ENCODE measurements at regions of chr10 and their contacts with region 1.

Region 1: DNA sequence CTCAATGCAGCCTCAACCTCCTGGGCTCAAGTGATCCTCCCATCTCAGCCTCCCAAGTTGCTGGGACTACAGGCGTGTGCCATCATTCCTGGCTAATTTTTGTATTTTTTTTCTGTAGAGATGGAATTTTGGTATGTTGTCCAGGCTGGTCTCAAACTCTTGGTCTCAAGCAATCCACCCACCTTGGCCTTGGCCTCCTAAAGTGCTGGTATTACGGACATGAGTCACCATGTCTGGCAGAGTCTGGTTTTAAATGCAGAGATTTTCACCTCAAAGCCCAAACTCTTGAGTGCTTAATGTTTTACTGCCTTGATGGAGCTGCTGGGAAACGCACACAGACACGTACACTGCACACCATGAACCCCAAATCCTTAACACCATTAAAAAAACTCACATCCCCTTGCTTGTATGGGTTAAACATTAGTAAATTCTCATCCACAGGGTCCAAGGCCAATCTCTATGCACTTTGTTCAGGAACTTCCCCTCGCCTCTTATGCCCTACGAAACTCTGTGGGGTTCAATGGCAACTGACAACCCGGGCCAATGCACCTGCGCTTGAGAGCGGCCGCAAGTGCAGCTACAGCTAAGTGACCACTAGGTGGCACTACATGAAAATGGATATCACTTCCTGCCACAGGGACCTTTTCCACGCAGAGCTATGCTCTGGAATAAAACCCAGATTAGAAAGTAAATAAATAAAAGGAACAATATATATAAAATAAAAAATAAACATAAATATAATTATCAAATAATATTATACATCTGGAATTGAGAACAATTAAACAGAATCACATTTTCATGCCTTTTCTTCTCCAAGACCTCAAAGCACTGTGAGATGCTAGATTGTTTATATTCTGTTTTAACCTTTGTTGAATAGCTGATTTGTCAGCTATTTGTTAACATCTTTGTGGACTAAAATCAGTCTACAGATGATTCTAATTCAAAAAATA is 66.9 kb upstream of the AFAP1L2 start:
- DNase-seq: peak; percentile 66 to 82
- ATAC-seq: peak; percentile 89
- H3K4me3 ChIP-seq: no peak overlapping the region
- H3K27ac ChIP-seq: no peak overlapping the region
- H3K4me1 ChIP-seq: no peaks in the 10 kb centered on the region
- H3K27me3 ChIP-seq: no peaks in the 10 kb centered on the region

Region 2: DNA sequence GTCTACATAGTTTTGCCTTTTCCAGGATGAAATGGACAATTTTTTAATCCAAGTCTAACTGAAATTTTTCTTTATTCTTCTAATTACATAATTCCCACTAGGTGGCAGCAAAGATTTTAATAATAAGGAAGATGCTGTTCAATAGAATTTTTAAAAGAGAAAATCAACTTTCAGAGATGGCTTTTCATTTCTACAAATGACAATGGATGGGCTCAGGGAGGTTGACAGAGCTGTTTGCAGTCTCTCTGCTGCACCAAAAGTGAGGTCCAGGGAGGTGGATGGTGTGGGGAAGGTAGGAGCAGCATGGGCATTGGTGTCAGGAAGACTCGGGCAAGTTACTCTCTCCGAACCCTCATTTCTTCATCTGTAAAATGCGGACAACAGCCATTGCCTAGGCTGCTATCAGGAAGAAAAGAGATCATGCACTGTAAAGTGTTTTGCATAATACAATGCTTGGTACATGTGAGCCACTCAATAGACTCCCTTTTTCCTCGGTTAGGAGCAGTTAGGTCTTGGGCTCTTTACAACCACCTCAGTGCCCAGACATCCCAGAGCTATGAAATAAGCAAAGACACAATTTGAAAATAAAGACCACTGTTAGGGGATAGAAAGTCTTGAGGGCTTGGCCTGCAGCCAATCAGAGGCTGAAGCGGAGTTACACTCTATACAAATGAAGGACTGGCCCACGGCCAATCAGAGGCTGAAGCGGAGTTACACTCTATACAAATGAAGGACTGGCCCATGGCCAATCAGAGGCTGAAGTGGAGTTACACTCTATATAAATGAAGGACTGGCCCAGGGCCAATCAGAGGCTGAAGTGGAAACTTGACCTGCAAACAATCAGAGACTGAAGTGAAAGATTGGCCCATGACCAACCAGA is 79.8 kb after region 1 on chr10:
- intact Hi-C with region 1: loop called (anchors 1 to 5 kb)
- DNase-seq: peak in 1 of 2 donors; percentile 53
- ATAC-seq: peak; percentile 58
- H3K4me3 ChIP-seq: no peak overlapping the region
- H3K27ac ChIP-seq: no peak overlapping the region
- H3K4me1 ChIP-seq: no peaks in the 10 kb centered on the region
- H3K27me3 ChIP-seq: no peaks in the 10 kb centered on the region

Region 3: DNA sequence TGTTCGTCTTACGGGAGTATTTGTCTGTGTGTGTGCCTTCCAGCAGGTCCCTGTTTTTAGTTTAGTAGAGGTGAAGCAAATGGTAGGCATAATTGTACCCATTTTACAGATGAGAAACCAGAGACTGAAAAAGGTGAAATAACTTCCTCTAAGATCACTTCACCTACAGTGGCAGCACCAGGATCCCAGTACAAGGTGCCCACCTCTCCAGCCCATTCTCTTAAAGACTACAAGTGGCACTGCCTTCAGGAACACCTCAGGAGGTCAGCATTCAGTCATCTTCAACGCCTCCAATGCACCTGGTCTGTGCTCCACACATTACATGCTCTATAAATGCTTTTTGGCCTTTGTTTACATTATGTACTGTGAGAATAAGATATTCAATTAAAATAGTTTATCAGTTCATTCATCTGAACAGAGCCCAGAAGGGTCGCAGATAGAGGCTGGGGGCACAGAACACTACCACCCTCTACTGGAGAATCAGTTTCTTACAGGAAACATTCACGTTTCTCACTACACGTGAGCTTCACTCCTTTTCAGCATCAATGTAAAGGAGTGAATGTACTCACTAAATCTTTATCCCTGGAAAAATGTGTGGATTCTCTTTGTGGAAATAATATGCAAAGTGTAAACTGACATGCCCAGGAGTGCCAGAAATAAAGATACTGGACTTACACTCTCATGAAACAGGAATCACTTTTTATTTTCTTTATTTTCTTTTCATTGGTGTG is 232.3 kb after region 1 on chr10:
- intact Hi-C with region 1: loop called (anchors 5 to 10 kb)
- DNase-seq: no peak
- ATAC-seq: no peak
- H3K4me3 ChIP-seq: no peak overlapping the region
- H3K27ac ChIP-seq: no peak overlapping the region
- H3K4me1 ChIP-seq: no peaks in the 10 kb centered on the region
- H3K27me3 ChIP-seq: no peaks in the 10 kb centered on the region

Region 4: GRCh38 chr10:114708717-114709335 is 237.6 kb after region 1 on chr10:
- intact Hi-C with region 1: loop called (anchors 5 to 10 kb)
- DNase-seq: no peak
- ATAC-seq: no peak
- H3K4me3 ChIP-seq: no peak overlapping the region
- H3K27ac ChIP-seq: no peak overlapping the region
- H3K4me1 ChIP-seq: no peaks in the 10 kb centered on the region
- H3K27me3 ChIP-seq: no peaks in the 10 kb centered on the region

Region 5: GRCh38 chr10:114779803-114780609 is 308.8 kb after region 1 on chr10:
- intact Hi-C with region 1: loop called in 1 of 2 experiments (anchors 10 kb)
- DNase-seq: no peak
- ATAC-seq: peak; percentile 48
- H3K4me3 ChIP-seq: no peak overlapping the region
- H3K27ac ChIP-seq: no peak overlapping the region
- H3K4me1 ChIP-seq: peaks cover 0 to 1% of the 10 kb centered on the region in 2 donors
- H3K27me3 ChIP-seq: no peaks in the 10 kb centered on the region

Region 6: GRCh38 chr10:115129752-115130151 is 658.5 kb after region 1 on chr10:
- intact Hi-C with region 1: loop called in 1 of 2 experiments (anchors 10 kb)
- DNase-seq: no peak
- ATAC-seq: no peak
- H3K4me3 ChIP-seq: no peak overlapping the region
- H3K27ac ChIP-seq: no peak overlapping the region
- H3K4me1 ChIP-seq: no peaks in the 10 kb centered on the region
- H3K27me3 ChIP-seq: no peaks in the 10 kb centered on the region

Measured in aorta (tissue), 5 donors.